Activated T-helper 1 cell treated with anti-CD3 and anti-CD28 coated beads, Interleukin-12 subunit alpha, Interleukin-12 subunit beta, Interleukin-2, Interleukin-4 antibody, amounts not matched to agents 30 ng/mL and 10 ng/mL and 1 ng/mL, durations not matched to agents 14 hours and 24 hours and 36 hours (primary cell): ENCODE measurements at regions of chr18 and their contacts with region 1.

Region 1: GRCh38 chr18:21682371-21683051 is 22.1 kb downstream of the ABHD3 start:
- DNase-seq: peak; percentile 17
- H3K4me3 Mint-ChIP-seq: no peak overlapping the region
- H3K27ac Mint-ChIP-seq: no peak overlapping the region
- H3K4me1 Mint-ChIP-seq: peaks cover 14% of the 10 kb centered on the region
- H3K27me3 Mint-ChIP-seq: no peaks in the 10 kb centered on the region

Region 2: DNA sequence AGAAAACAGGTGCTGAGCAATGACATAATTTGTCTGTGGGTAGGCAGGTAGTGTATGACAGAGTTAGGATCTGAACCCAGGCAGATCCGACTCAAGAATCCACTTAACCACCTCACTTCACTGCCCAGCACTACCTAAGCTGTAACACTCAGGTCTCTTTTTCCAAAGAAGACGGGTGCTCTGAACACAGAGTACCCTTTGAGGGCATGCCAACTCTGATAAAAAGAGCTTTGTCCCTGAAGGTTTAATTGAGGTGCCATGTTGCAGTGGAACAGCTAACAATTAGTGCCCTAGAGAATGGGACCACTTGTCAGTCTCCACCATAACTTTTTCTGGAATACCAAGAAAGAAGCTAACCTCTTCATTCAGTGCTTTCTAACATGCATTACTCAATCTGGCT is 10.8 kb after region 1 on chr18:
- intact Hi-C with region 1: loop called (anchors 1 kb)
- DNase-seq: no peak
- H3K4me3 Mint-ChIP-seq: no peak overlapping the region
- H3K27ac Mint-ChIP-seq: no peak overlapping the region
- H3K4me1 Mint-ChIP-seq: peaks cover 4% of the 10 kb centered on the region
- H3K27me3 Mint-ChIP-seq: no peaks in the 10 kb centered on the region

Region 3: GRCh38 chr18:21740724-21741510 is 58.4 kb after region 1 on chr18 and contains the start of gene MIB1:
- intact Hi-C with region 1: loop called (anchors 1 kb)
- DNase-seq: no peak
- H3K4me3 Mint-ChIP-seq: peak within 1 kb of the TSS; percentile 93
- H3K27ac Mint-ChIP-seq: peak within 1 kb of the TSS; percentile 94
- H3K4me1 Mint-ChIP-seq: peaks cover 45% of the 10 kb centered on the region
- H3K27me3 Mint-ChIP-seq: peaks cover 18% of the 10 kb centered on the region
- total RNA-seq, gene MIB1: 29.8 and 31.7 TPM in 2 replicates